Body of pancreas (tissue), 4 donors: ENCODE measurements at regions of chrX and their contacts with region 1.

Region 1: DNA sequence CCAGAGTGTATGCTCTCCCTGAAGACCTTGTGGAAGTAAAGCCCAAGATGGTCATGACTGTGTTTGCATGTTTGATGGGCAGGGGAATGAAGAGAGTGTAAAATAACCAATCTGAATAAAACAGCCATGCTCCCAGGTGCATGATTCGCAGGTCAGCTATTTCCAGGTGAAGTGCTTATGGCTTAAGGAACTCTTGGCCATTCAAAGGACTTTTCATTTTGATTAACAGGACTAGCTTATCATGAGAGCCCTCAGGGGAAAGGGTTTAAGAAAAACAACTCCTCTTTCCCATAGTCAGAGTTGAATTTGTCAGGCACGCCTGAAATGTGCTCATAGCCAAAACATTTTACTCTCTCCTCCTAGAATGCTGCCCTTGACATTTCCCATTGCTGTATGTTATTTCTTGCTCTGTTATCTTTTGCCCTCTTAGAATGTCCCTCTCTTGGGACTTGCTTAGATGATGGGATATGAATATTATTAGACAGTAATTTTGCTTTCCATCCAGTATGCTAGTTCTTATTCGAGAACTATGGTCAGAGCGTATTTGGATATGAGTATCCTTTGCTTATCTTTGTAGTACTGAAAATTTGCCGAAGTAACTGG is 88.6 kb downstream of the PLS3 start:
- DNase-seq: no peak
- ATAC-seq: no peak
- H3K4me3 ChIP-seq: no peak overlapping the region
- H3K27ac ChIP-seq: no peak overlapping the region
- H3K4me1 ChIP-seq: no peaks in the 10 kb centered on the region
- H3K27me3 ChIP-seq: no peaks in the 10 kb centered on the region
- CTCF ChIP-seq: no peak
- POLR2A ChIP-seq: no peak

Region 2: DNA sequence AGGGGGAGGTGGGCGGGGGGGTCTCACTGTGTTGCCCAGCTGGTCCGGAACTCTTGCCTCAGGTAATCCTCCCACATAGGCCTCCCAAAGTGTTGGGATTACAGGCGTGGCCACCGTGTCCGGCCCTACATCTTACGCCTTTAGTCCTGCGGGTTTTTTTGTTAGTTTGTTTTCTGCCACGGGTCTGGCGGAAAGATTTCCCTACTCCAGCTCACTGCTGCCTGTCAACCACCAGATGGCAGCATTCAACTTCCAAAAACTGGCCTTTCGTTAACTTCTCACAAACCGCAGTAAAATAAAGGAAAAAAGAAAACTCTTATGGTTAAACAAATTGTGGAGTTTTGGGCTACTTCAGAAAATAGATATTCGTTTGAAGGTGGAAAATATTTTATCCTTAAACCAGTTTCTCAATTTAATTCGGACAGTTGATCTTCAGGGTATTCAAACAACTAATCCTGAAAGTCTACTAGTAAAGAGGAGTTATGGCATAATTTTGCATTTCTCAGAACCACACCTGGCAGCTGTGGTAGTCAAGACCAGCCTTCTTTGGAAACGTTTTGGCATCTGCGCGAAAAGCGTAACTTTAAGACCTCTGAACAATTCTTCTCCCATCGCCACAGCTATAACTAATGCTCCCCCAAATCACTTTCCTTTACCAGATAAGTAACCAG is 318.9 kb before region 1 on chrX:
- intact Hi-C with region 1: loop called (anchors 5 kb)
- DNase-seq: peak; percentile 23 to 44 (median 32)
- ATAC-seq: no peak
- H3K4me3 ChIP-seq: no peak overlapping the region
- H3K27ac ChIP-seq: no peak overlapping the region
- H3K4me1 ChIP-seq: no peaks in the 10 kb centered on the region
- H3K27me3 ChIP-seq: no peaks in the 10 kb centered on the region
- CTCF ChIP-seq: peak in 6 of 7 experiments; percentile 52 to 85 (median 68)
- POLR2A ChIP-seq: no peak

Region 3: DNA sequence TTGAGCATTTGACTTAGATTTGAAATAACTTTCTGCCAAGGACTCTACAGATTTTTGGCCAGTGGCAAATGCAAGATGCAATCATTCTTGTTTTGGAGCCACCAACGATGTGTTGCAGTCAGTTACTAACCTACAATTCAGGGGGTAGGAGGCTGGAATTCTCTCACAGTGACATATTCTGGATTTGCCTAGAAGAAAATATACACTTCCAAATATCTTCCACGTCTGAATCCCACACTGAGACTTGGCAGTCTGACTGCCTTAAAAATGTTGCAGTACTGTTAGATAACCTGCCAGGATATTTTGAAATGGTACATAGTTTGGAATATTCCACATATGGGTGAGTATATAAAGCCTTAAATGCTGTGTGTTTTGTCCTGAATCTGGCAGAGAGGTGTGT is 493.4 kb after region 1 on chrX:
- intact Hi-C with region 1: no loop called
- DNase-seq: no peak
- ATAC-seq: no peak
- H3K4me3 ChIP-seq: no peak overlapping the region
- H3K27ac ChIP-seq: no peak overlapping the region
- H3K4me1 ChIP-seq: no peaks in the 10 kb centered on the region
- H3K27me3 ChIP-seq: no peaks in the 10 kb centered on the region
- CTCF ChIP-seq: no peak
- POLR2A ChIP-seq: no peak